ENCODE measurements at regions of chr3 and their contacts with region 1.

Region 1: DNA sequence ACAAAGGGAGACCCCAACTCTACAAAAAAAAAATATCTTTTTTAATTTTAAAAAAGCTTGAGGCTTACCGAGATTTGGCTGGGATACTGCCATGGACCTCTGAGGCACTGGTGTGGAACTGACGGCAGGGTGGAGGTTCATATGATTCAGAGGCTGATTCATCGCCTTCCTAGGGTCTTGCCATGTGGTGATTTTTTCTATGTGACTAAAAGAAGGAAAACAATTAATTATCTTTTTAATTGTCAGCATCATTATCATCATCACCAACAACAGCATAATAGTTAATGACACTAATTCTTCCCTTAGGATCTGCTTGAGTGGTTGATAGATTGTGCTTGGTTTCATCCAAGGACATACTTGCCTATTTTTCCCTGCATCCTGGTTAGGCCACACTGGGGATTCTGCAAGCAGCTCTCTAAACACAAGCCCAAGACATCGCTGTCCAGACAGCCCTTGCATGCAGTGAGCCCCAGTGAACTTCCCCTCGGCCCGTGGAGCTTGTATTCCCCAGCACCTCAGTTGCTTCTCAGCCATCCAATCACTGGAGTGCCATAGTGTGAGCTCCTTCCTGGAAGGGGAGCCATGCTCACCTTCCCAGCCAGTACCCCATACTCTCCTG is 84.9 kb downstream of the WWTR1 start:
- DNase-seq: no peak
- ATAC-seq: no peak
- H3K4me3 Mint-ChIP-seq: no peak overlapping the region
- H3K27ac Mint-ChIP-seq: no peak overlapping the region
- H3K4me1 Mint-ChIP-seq: peaks cover 11% of the 10 kb centered on the region
- H3K27me3 Mint-ChIP-seq: peaks cover 4% of the 10 kb centered on the region

Region 2: GRCh38 chr3:149615731-149616221 is 42.9 kb after region 1 on chr3:
- CTCF ChIA-PET with region 1: no interaction called
- POLR2A ChIA-PET with region 1: no interaction called
- DNase-seq: no peak
- ATAC-seq: no peak
- H3K4me3 Mint-ChIP-seq: no peak overlapping the region
- H3K27ac Mint-ChIP-seq: no peak overlapping the region
- H3K4me1 Mint-ChIP-seq: peaks cover 2% of the 10 kb centered on the region
- H3K27me3 Mint-ChIP-seq: peaks cover 22% of the 10 kb centered on the region

Region 3: DNA sequence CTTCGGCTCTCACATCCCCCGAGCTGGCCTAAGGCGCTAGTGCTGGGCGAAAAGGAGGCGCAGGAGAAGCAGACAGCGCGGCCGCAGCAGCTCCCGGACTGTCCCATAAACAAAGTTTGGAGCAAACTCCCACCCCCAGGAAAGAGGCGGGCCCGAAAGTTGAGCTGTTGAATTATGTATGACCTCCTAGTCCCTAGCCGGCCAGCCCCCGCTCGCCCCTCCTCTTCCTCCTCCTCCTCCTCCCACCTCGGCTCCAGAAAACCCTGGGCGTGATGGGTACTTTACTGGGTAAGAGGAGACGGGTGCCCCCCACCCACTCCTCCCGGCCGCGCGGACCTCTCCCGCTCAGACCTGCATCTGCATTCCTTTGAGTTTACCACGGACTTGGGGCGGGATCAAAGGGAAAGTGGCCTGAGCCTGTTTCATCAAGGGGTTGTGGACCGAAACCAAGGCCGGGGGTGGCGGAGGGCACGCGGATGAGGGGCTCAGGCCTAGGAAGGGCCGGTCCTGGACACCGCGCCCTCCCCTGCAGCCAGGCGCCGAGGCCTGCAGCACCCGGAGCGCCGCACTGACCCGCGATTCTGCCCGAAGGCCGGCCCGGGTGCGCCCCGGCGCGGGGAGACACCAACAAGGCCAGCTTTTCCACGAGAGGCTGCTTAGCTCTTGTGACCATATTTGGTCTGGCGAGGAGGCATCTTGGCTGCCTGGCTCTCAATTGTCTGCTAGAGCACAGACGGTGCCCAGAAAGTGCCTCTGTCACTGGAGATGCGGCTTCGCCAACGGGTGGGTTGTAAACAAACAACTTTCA is 85.2 kb after region 1 on chr3 and contains the start of gene WWTR1:
- CTCF ChIA-PET with region 1: interaction called, 10 read pairs
- POLR2A ChIA-PET with region 1: no interaction called
- DNase-seq: peak; percentile 40
- ATAC-seq: peak; percentile 65
- H3K4me3 Mint-ChIP-seq: peak within 1 kb of the TSS; percentile 79
- H3K27ac Mint-ChIP-seq: no peak within 1 kb of the TSS
- H3K4me1 Mint-ChIP-seq: peaks cover 13% of the 10 kb centered on the region
- H3K27me3 Mint-ChIP-seq: peaks cover 52% of the 10 kb centered on the region
- total RNA-seq, gene WWTR1: 0.31 to 0.53 TPM